Activated CD4-positive, alpha-beta T cell treated with anti-CD3 and anti-CD28 coated beads for 36 hours (primary cell): ENCODE measurements at regions of chr3 and their contacts with region 1.

Region 1: DNA sequence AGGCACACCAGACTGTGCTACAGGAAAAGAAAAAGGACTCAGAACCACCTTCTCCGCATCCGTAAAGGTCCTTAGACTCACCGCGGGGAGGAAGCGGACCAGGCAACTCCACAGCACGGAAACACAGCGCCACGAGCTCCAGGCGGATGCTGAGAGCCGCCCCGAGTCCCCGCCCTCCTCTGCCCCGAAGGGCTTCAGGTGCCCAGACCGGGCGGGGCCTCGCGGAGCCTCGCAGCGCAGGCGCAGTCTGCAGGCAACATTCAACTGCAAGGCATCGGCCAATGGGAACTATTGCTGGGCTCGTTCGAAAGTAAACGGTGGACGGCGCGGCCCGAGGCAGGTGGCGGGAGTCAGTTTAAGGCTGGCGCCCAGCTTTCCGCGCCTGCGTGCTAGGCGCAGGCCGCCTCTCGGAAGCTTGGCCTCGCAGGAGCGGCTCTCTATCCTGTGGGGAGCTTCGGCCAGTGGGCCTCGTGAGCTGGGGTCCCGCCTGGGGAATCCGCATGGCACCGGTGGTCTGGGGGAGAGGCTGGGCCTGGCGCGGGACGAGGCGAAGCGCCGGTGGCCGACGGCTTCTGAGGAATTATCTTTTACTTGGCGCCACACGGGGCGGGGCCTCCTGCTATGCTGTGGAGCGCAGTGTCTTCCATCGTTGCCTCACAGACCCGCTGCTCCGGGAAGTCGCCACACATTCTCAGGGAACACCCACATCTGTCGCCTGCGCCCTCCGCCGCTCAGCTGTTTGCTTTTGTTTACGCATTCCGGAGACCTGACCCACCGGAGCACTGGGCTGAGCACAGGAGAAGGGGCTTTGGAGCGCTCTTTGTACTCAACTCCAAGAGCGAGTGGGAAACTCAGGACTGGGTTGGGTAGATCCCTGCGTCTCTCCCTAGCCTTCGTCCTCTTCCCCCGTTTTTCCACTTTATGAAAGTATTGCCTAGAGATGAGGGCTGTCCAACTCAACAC is at the start of gene TRIM59:
- DNase-seq: peak; percentile 99
- ATAC-seq: peak; percentile 95
- H3K4me3 Mint-ChIP-seq: peak within 1 kb of the TSS; percentile 97
- H3K27ac Mint-ChIP-seq: peak within 1 kb of the TSS; percentile 96
- H3K4me1 Mint-ChIP-seq: peaks cover 20% of the 10 kb centered on the region
- H3K27me3 Mint-ChIP-seq: no peaks in the 10 kb centered on the region
- total RNA-seq, gene TRIM59: 32.5 to 42.2 TPM

Region 2: DNA sequence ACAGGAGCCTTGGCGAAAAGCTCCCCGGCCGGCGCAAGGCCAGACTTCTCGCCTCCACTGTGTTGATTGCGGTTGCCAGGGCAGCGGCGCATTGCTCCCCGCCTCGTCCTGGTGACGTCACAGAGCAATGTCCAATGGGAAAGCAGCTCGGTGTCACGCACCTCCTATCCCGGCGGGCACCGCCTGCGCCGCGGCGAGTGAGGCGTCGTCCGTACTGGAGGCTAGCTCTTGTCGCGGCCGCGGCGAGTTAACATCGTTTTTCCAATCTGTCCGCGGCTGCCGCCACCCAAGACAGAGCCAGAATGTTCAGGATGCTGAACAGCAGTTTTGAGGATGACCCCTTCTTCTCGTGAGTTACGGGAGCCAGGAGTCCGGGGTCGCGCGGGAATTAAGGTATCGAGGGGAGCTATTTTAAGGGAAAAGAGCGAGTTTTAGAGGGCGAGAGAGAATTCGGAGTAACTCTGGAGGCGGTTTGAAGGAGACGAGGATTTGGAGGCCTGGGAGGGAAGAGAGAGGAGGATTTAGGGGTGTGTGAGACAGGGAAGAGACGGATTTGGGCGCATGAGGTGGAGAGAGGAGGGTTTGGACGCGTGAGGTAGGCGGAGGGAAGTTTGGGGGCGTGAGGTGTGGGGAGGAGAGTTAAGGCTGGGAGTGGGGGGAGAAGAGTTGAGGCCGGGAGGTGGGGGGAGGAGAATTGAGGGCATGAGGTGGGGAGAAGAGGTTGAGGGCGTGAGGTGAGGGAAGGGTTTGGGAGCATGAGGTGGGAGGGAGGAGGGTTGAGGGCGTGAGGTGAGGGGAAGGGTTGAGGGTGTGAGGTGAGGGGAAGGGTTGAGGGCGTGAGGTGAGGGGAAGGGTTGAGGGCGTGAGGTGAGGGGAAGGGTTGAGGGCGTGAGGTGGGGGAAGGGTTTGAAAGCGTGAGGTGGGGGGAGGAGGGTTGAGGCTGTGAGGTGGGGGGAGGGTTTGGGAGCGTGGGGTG is 1878.6 kb before region 1 on chr3 and contains the start of gene MLF1:
- CTCF ChIA-PET with region 1: no interaction called
- POLR2A ChIA-PET with region 1: no interaction called
- intact Hi-C with region 1: loop called in 1 of 2 experiments (anchors 2 kb)
- DNase-seq: peak; percentile 93
- ATAC-seq: peak; percentile 100
- H3K4me3 Mint-ChIP-seq: peak within 1 kb of the TSS; percentile 78
- H3K27ac Mint-ChIP-seq: peak within 1 kb of the TSS; percentile 63
- H3K4me1 Mint-ChIP-seq: peaks cover 12% of the 10 kb centered on the region
- H3K27me3 Mint-ChIP-seq: peaks cover 28% of the 10 kb centered on the region
- total RNA-seq, gene MLF1: 2.4 to 3.4 TPM

Region 3: DNA sequence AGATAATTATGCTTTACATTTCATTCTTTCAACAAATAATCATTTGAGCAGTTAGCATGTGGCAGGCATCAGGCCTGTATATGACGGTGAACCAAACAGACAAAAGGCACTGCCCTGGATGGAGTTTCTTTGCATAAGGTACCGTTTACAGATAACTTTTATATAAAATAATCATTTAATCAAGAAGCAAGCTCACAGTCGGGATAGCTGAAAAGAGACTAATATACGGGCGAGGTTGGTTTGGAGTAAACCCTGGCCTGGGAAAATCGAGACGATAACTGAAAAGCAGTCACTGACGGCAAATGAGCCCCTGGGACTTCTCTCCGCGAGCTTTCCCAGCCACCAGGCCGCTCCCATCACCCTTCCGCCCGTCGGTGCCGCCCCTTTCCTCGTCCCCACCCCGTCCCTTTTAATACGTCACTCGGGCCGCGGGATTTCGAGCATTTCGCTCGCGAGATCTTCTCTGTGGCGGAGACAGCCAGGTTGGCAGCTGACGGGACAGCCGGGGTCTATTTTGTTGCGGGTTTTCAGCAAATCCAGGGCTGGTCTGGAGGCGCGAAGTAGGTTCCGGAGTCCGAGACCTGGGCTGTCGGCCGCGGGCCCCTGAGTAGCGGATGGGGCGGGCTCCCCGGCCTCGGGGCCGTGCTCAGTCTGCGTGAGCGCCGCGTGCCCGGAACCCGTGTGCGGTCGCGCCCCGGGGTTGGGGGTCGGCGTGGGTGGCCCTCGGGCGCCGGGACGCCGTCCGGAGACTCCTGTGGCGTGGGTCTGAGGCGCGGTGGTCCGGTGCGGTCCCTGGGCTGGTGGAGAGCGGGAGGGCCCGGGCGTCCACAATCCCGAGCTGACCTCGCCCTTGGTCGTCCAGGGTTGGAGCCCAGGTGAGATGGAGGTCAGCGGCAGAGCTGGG is 771.2 kb after region 1 on chr3 and contains the start of gene NMD3:
- CTCF ChIA-PET with region 1: no interaction called
- POLR2A ChIA-PET with region 1: interaction called, 3 read pairs
- intact Hi-C with region 1: loop called in 1 of 2 experiments (anchors 5 kb)
- DNase-seq: peak; percentile 97
- ATAC-seq: peak; percentile 98
- H3K4me3 Mint-ChIP-seq: peak within 1 kb of the TSS; percentile 86
- H3K27ac Mint-ChIP-seq: peak within 1 kb of the TSS; percentile 88
- H3K4me1 Mint-ChIP-seq: peaks cover 26% of the 10 kb centered on the region
- H3K27me3 Mint-ChIP-seq: peaks cover 4% of the 10 kb centered on the region
- total RNA-seq, gene NMD3: 49.6 to 65.5 TPM